Mammary epithelial cell (primary cell): ENCODE measurements at regions of chr22 and their contacts with region 1.

Region 1: DNA sequence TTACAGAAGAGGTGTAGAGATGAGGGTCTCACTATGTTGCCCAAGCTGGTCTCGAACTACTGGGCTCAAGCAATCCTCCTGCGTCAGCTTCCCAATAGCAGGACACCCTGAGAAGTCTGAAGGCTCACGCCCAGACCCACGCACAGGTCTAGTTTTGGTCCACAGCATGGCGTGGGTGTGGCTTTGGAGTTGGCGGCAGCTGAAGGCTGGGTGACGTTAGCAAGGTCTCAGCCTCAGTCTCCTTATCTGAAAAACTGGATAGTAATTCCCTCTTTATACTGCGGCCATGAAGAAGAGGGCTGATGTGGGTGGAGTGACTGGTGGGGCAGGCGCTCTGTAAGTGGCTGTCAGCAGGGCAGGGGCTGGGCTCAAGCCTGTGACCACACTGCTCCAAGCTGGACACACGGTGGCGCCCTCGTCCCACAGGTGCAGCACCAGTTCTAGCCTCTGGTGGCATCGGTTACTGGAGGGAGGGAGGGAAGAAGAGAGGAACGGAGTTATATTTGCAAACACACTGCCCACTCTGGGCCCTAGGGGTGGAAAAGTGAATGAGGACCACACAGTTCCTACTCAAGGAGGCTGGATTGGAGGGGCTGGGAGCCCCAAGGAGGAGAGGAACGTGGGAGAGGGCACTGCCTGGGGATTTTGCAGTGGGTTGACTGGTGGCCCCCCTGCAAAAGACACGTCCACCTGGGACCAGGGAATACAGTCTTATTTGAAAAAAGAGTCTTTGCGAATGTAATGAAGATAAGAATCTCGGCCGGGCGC is 19.6 kb upstream of the CARD10 start:
- DNase-seq: peak; percentile 90
- H3K4me3 ChIP-seq: peak overlapping the region in 1 of 3 experiments; percentile 5
- H3K27ac ChIP-seq: peak overlapping the region; percentile 26
- H3K4me1 ChIP-seq: peaks cover 37% of the 10 kb centered on the region
- H3K27me3 ChIP-seq: no peaks in the 10 kb centered on the region
- CTCF ChIP-seq: peak; percentile 95 to 96

Region 2: GRCh38 chr22:37428649-37429586 is 109.9 kb before region 1 on chr22:
- CTCF ChIA-PET with region 1: no interaction called
- dilution Hi-C with region 1: no loop called
- in situ Hi-C with region 1: no loop called
- intact Hi-C with region 1: no loop called
- DNase-seq: no peak
- H3K4me3 ChIP-seq: no peak overlapping the region
- H3K27ac ChIP-seq: no peak overlapping the region
- H3K4me1 ChIP-seq: peaks cover 36% of the 10 kb centered on the region
- H3K27me3 ChIP-seq: no peaks in the 10 kb centered on the region
- CTCF ChIP-seq: peak; percentile 49 to 65

Region 3: DNA sequence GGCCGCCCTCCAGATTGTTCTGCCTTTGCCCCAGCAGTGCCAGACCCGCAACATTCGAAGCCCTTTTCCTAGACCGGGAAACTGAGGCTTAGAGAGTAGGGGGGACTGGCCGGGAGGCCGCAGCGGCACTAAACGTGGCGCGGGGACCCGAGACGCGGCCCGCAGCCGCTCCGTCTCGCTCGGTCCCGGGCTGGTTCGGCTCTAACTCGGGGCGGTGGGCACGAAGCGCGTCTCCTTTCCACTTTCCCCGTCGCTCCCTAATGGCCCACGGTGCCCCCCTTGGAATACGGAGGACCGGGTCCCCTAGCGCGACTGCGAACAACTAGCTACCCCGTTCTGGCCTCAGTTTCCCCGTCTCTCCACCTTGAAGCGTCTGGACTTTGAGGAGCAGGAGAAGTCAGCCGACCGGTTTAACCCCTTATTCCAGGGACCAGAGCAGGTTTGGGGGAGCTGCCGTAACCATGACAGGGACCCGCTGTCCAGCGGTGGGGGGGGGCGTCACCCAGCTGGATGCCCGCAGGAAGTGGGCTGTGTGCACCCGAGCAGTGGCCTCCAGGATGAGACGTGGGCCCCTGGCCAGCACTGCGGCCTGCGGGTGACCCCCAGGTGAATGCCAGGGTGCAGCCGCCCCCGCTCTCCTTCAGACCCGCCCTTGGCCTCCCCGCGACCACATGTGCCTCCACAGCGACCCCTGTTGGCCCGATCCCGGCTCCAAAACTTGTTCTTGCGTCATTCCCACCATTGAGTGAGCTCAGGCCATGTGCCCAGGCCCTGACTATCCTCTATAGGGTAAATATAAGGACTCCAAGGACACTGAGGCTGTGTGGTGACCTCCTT is 22.7 kb after region 1 on chr22:
- CTCF ChIA-PET with region 1: interaction called, 5 read pairs
- dilution Hi-C with region 1: no loop called
- in situ Hi-C with region 1: no loop called
- intact Hi-C with region 1: loop called (anchors 1 kb)
- DNase-seq: peak; percentile 89
- H3K4me3 ChIP-seq: peak overlapping the region; percentile 71 to 91 (median 78)
- H3K27ac ChIP-seq: peak overlapping the region; percentile 90
- H3K4me1 ChIP-seq: peaks cover 46% of the 10 kb centered on the region
- H3K27me3 ChIP-seq: no peaks in the 10 kb centered on the region
- CTCF ChIP-seq: peak; percentile 79 to 88

Region 4: GRCh38 chr22:37594237-37594636 is 55.5 kb after region 1 on chr22:
- CTCF ChIA-PET with region 1: interaction called, 19 read pairs
- dilution Hi-C with region 1: no loop called
- in situ Hi-C with region 1: no loop called
- intact Hi-C with region 1: loop called (anchors 1 kb)
- DNase-seq: no peak
- H3K4me3 ChIP-seq: no peak overlapping the region
- H3K27ac ChIP-seq: no peak overlapping the region
- H3K4me1 ChIP-seq: no peaks in the 10 kb centered on the region
- H3K27me3 ChIP-seq: no peaks in the 10 kb centered on the region
- CTCF ChIP-seq: no peak

Region 5: GRCh38 chr22:37676736-37677492 is 138.1 kb after region 1 on chr22:
- CTCF ChIA-PET with region 1: no interaction called
- dilution Hi-C with region 1: no loop called
- in situ Hi-C with region 1: no loop called
- intact Hi-C with region 1: loop called (anchors 1 kb)
- DNase-seq: peak; percentile 96
- H3K4me3 ChIP-seq: peak overlapping the region; percentile 67 to 76 (median 72)
- H3K27ac ChIP-seq: peak overlapping the region; percentile 78
- H3K4me1 ChIP-seq: peaks cover 33% of the 10 kb centered on the region
- H3K27me3 ChIP-seq: no peaks in the 10 kb centered on the region
- CTCF ChIP-seq: no peak

Region 6: GRCh38 chr22:37792494-37792893 is 253.7 kb after region 1 on chr22:
- CTCF ChIA-PET with region 1: no interaction called
- dilution Hi-C with region 1: no loop called
- in situ Hi-C with region 1: no loop called
- intact Hi-C with region 1: loop called (anchors 5 kb)
- DNase-seq: no peak
- H3K4me3 ChIP-seq: no peak overlapping the region
- H3K27ac ChIP-seq: no peak overlapping the region
- H3K4me1 ChIP-seq: no peaks in the 10 kb centered on the region
- H3K27me3 ChIP-seq: no peaks in the 10 kb centered on the region
- CTCF ChIP-seq: no peak